ENCODE measurements at regions of chr1 and their contacts with region 1.

Region 1: GRCh38 chr1:6199298-6200187 is at the start of gene RPL22:
- DNase-seq: peak; percentile 79 to 98 (median 96)
- ATAC-seq: peak; percentile 99
- H3K4me3 ChIP-seq: peak within 1 kb of the TSS; percentile 79
- H3K4me3 Mint-ChIP-seq: peak within 1 kb of the TSS; percentile 85 to 98 (median 94)
- H3K27ac ChIP-seq: peak within 1 kb of the TSS; percentile 85
- H3K27ac Mint-ChIP-seq: peak within 1 kb of the TSS; percentile 82 to 96 (median 93)
- H3K4me1 ChIP-seq: peaks cover 24 to 25% of the 10 kb centered on the region in 2 donors
- H3K4me1 Mint-ChIP-seq: peaks cover 40 to 56% (median 47%) of the 10 kb centered on the region in 7 donors
- H3K27me3 ChIP-seq: no peaks in the 10 kb centered on the region
- H3K27me3 Mint-ChIP-seq: peaks cover 0 to under 1% (median 0%) of the 10 kb centered on the region in 5 donors
- total RNA-seq, gene RPL22: 431 to 720 (median 579) TPM

Region 2: GRCh38 chr1:5992026-5992813 is 207.3 kb before region 1 on chr1 and contains the start of gene NPHP4:
- CTCF ChIA-PET with region 1: no interaction called
- POLR2A ChIA-PET with region 1: interaction called, 4 read pairs
- intact Hi-C with region 1: loop called (anchors 1 kb)
- DNase-seq: peak; percentile 95 to 99 (median 99)
- ATAC-seq: peak; percentile 93
- H3K4me3 ChIP-seq: peak within 1 kb of the TSS; percentile 88
- H3K4me3 Mint-ChIP-seq: peak within 1 kb of the TSS; percentile 88 to 100 (median 96)
- H3K27ac ChIP-seq: peak within 1 kb of the TSS; percentile 94
- H3K27ac Mint-ChIP-seq: peak within 1 kb of the TSS; percentile 88 to 97 (median 96)
- H3K4me1 ChIP-seq: peaks cover 23 to 32% of the 10 kb centered on the region in 2 donors
- H3K4me1 Mint-ChIP-seq: peaks cover 23 to 49% (median 40%) of the 10 kb centered on the region in 7 donors
- H3K27me3 ChIP-seq: no peaks in the 10 kb centered on the region
- H3K27me3 Mint-ChIP-seq: peaks cover 0 to 2% (median 0%) of the 10 kb centered on the region in 5 donors
- total RNA-seq, gene NPHP4: 9.0 to 20.6 (median 11.1) TPM

Region 3: DNA sequence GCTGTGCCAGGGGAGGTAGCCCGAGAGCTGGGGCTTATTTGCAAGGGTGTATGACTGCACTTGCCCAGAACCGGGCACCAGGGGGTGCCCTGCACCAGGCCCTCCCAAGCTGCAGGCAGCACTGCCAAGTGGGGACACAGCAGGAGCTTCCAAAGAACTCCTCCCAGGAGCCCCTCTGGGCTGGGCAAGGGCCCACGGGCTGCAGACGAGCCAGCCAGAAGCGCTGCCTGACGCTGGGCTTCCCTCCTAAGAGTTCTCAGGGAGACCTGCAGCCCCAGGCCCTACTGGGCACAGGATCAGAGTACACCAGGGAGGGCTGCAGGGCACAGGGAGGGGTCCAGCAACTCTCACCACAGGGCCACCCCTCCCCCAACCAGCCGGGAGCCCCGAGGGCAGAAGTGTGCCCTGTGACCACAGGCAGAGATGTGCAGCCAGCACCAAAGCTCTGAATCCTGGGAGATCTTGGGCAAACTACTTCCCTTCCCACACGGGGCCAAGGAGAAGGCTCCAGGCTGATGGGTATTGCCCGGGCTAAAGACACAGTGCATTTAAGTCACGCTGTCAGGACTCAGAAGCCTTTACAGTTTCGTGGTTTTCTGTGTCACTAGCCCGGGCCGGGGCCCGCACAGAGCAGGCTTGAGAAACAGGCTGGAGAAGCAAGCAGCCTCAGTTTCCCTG is 90.5 kb before region 1 on chr1:
- CTCF ChIA-PET with region 1: no interaction called
- POLR2A ChIA-PET with region 1: no interaction called
- intact Hi-C with region 1: loop called in 1 of 2 experiments (anchors 10 kb)
- DNase-seq: peak in 2 of 9 donors; percentile 29 to 46
- ATAC-seq: peak; percentile 78
- H3K4me3 ChIP-seq: no peak overlapping the region
- H3K4me3 Mint-ChIP-seq: no peak overlapping the region
- H3K27ac ChIP-seq: no peak overlapping the region
- H3K27ac Mint-ChIP-seq: peak overlapping the region in 1 of 9 donors; percentile 13
- H3K4me1 ChIP-seq: no peaks in the 10 kb centered on the region
- H3K4me1 Mint-ChIP-seq: peaks cover 0 to 5% (median 0%) of the 10 kb centered on the region in 7 donors
- H3K27me3 ChIP-seq: no peaks in the 10 kb centered on the region
- H3K27me3 Mint-ChIP-seq: peaks cover 0 to 25% (median 9%) of the 10 kb centered on the region in 5 donors

Region 4: DNA sequence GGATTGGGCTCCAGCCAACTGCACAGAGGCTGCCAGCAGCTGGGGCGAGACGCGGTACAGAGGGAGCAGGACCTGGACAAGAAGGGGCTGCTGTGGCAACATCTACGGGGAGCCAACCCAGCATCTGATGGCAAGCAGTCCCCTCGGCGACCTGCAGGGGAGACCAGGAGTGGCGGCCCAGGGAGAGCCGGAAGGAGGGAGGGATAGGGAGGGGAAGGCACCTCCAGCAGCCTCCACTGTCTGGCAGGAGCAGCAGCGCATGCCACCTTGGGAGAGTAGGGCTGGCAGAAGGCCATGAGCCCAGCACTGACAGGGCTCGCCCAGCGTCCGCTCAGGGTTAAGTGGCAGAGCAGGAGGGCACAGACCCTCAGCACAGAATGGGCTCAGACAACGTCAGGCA is 36.8 kb before region 1 on chr1:
- CTCF ChIA-PET with region 1: no interaction called
- POLR2A ChIA-PET with region 1: no interaction called
- intact Hi-C with region 1: no loop called
- DNase-seq: no peak
- ATAC-seq: no peak
- H3K4me3 ChIP-seq: no peak overlapping the region
- H3K4me3 Mint-ChIP-seq: no peak overlapping the region
- H3K27ac ChIP-seq: no peak overlapping the region
- H3K27ac Mint-ChIP-seq: no peak overlapping the region
- H3K4me1 ChIP-seq: no peaks in the 10 kb centered on the region
- H3K4me1 Mint-ChIP-seq: peaks cover 0 to 8% (median 0%) of the 10 kb centered on the region in 7 donors
- H3K27me3 ChIP-seq: no peaks in the 10 kb centered on the region
- H3K27me3 Mint-ChIP-seq: peaks cover 3 to 27% (median 13%) of the 10 kb centered on the region in 5 donors

Region 5: GRCh38 chr1:6613361-6614018 is 413.9 kb after region 1 on chr1 and contains the start of gene PHF13:
- CTCF ChIA-PET with region 1: no interaction called
- POLR2A ChIA-PET with region 1: no interaction called
- intact Hi-C with region 1: loop called (anchors 1 kb)
- DNase-seq: peak; percentile 97 to 99 (median 98)
- ATAC-seq: peak; percentile 98
- H3K4me3 ChIP-seq: peak within 1 kb of the TSS; percentile 53
- H3K4me3 Mint-ChIP-seq: peak within 1 kb of the TSS; percentile 88 to 97 (median 93)
- H3K27ac ChIP-seq: peak within 1 kb of the TSS; percentile 82
- H3K27ac Mint-ChIP-seq: peak within 1 kb of the TSS; percentile 69 to 95 (median 88)
- H3K4me1 ChIP-seq: peaks cover 0 to 14% of the 10 kb centered on the region in 2 donors
- H3K4me1 Mint-ChIP-seq: peaks cover 16 to 37% (median 25%) of the 10 kb centered on the region in 7 donors
- H3K27me3 ChIP-seq: no peaks in the 10 kb centered on the region
- H3K27me3 Mint-ChIP-seq: peaks cover 0 to 2% (median 0%) of the 10 kb centered on the region in 5 donors
- total RNA-seq, gene PHF13: 7.7 to 14.3 (median 12.2) TPM

Region 6: DNA sequence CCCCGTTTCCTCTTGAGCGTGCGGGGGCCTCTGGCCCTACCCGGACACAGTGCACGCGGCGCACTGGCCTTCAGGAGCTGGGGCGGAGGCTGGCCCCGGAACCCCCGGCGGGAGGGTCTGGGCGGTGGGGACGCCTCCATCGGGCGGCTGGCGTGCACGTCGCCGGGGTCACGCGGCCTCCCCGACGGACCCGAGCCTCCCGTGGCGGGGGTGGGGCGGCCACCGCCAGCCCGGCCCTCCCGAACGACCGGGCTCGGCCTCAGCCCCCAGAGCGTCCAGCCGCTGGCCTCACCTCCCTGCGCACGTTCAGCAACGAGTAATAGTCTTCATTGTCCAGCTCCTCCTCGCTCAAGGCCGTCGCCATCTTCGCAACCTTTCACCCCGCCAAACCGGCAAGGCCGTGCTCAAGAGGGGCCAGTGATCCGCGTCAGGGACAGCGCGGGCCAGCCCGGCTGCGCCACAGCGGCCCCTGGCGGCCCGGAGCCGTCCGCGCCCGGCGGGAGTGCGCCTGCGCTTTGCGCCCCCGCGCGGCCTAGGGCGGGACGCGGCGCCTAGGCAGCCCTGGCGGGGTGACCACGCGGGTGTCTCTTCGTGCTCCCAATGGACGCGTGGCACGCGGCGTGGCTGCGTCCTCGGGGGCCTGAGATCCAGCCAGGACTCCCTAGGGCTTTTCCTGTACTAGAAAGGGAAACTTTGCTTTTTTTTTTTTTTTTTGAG is 502.1 kb after region 1 on chr1 and contains the start of gene DNAJC11:
- CTCF ChIA-PET with region 1: no interaction called
- POLR2A ChIA-PET with region 1: no interaction called
- intact Hi-C with region 1: loop called in 1 of 2 experiments (anchors 1 kb)
- DNase-seq: peak; percentile 84 to 99 (median 93)
- ATAC-seq: peak; percentile 99
- H3K4me3 ChIP-seq: peak within 1 kb of the TSS; percentile 90
- H3K4me3 Mint-ChIP-seq: peak within 1 kb of the TSS; percentile 87 to 96 (median 93)
- H3K27ac ChIP-seq: peak within 1 kb of the TSS; percentile 92
- H3K27ac Mint-ChIP-seq: peak within 1 kb of the TSS; percentile 77 to 95 (median 92)
- H3K4me1 ChIP-seq: peaks cover 8 to 9% of the 10 kb centered on the region in 2 donors
- H3K4me1 Mint-ChIP-seq: peaks cover 7 to 40% (median 32%) of the 10 kb centered on the region in 7 donors
- H3K27me3 ChIP-seq: no peaks in the 10 kb centered on the region
- H3K27me3 Mint-ChIP-seq: no peaks in the 10 kb centered on the region
- total RNA-seq, gene DNAJC11: 37.2 to 49.7 (median 44.0) TPM

Measured in naive thymus-derived CD4-positive, alpha-beta T cell (primary cell).